ENCODE measurements at regions of chr2 and their contacts with region 1.

Region 1: GRCh38 chr2:44361330-44362206 is at the starts of genes CAMKMT and PREPL:
- DNase-seq: peak; percentile 99
- H3K4me3 ChIP-seq: peak within 1 kb of the TSS; percentile 82 to 98 (median 92)
- H3K27ac ChIP-seq: peak within 1 kb of the TSS; percentile 86 to 95 (median 91)
- H3K4me1 ChIP-seq: peaks cover 0 to 38% (median 27%) of the 10 kb centered on the region in 4 donors
- H3K27me3 ChIP-seq: no peaks in the 10 kb centered on the region
- CTCF ChIP-seq: no peak
- EP300 ChIP-seq: peak in 2 of 4 donors; percentile 41 to 66
- POLR2A ChIP-seq: peak; percentile 48 to 60
- total RNA-seq, gene CAMKMT: 11.6 to 15.6 (median 13.5) TPM
- total RNA-seq, gene PREPL: 41.5 to 52.6 (median 48.1) TPM

Region 2: GRCh38 chr2:43995733-43996533 is 365.6 kb before region 1 on chr2 and contains the start of gene LRPPRC:
- intact Hi-C with region 1: loop called (anchors 5 kb)
- DNase-seq: peak; percentile 98
- H3K4me3 ChIP-seq: peak within 1 kb of the TSS; percentile 81 to 100 (median 98)
- H3K27ac ChIP-seq: peak within 1 kb of the TSS; percentile 85 to 90 (median 88)
- H3K4me1 ChIP-seq: peaks cover 0 to 31% (median 25%) of the 10 kb centered on the region in 4 donors
- H3K27me3 ChIP-seq: no peaks in the 10 kb centered on the region
- CTCF ChIP-seq: no peak
- EP300 ChIP-seq: peak in 1 of 4 donors; percentile 35
- POLR2A ChIP-seq: peak; percentile 45 to 70
- total RNA-seq, gene LRPPRC: 49.7 to 65.7 (median 55.8) TPM

Region 3: GRCh38 chr2:44087036-44087713 is 274.4 kb before region 1 on chr2:
- intact Hi-C with region 1: loop called (anchors 5 kb)
- DNase-seq: peak; percentile 90
- H3K4me3 ChIP-seq: peak overlapping the region; percentile 13 to 45 (median 36)
- H3K27ac ChIP-seq: peak overlapping the region; percentile 53 to 74 (median 68)
- H3K4me1 ChIP-seq: peaks cover 0 to 15% (median 9%) of the 10 kb centered on the region in 4 donors
- H3K27me3 ChIP-seq: no peaks in the 10 kb centered on the region
- CTCF ChIP-seq: peak; percentile 74 to 95 (median 90)
- EP300 ChIP-seq: no peak
- POLR2A ChIP-seq: no peak

Region 4: DNA sequence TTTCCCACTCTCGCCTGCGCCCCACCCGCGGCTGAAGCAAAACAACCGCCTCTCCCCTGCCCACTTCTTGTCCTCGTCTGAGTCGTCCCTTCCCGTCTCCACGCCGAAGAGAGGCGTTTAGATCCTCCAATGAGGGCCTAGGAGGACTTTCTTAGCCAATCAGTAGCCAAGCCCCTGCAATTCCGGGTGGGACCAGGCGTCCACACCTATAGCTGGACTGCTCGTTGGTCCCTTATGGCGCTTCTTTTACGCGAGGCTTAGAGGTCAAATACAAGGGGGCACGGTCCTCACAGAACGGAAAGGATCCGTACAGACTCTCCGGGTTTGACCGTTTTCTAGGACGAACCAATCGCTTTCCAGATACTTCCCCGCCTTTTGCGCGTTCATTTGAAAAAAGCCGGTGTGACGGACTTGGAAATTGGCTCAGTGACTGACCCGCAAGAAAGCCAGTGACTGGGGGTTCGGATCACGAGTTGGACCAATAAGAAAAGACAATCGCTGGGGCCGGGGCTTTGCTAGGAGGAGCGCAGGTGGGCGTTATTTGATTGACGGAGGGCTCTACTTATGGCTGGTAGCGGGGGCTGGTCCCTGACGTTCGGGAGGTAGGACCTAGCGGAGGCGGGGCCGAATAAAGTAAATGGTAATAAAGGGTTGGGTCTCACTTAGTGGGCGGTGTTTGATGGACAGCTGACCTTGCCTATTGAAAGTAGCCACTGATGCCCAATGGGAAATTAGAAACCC is 193.5 kb before region 1 on chr2:
- intact Hi-C with region 1: loop called (anchors 2 kb)
- DNase-seq: peak; percentile 100
- H3K4me3 ChIP-seq: peak overlapping the region; percentile 43 to 87 (median 54)
- H3K27ac ChIP-seq: peak overlapping the region; percentile 95 to 96 (median 95)
- H3K4me1 ChIP-seq: peaks cover 0 to 25% (median 16%) of the 10 kb centered on the region in 4 donors
- H3K27me3 ChIP-seq: no peaks in the 10 kb centered on the region
- CTCF ChIP-seq: no peak
- EP300 ChIP-seq: no peak
- POLR2A ChIP-seq: no peak

Region 5: GRCh38 chr2:44244129-44244871 is 117.3 kb before region 1 on chr2:
- intact Hi-C with region 1: loop called (anchors 10 kb)
- DNase-seq: peak; percentile 72
- H3K4me3 ChIP-seq: peak overlapping the region; percentile 12 to 44 (median 31)
- H3K27ac ChIP-seq: peak overlapping the region in 1 of 4 donors; percentile 22
- H3K4me1 ChIP-seq: peaks cover 0 to 9% (median 5%) of the 10 kb centered on the region in 4 donors
- H3K27me3 ChIP-seq: no peaks in the 10 kb centered on the region
- CTCF ChIP-seq: peak in 3 of 4 experiments; percentile 26 to 59 (median 29)
- EP300 ChIP-seq: no peak
- POLR2A ChIP-seq: no peak

Region 6: GRCh38 chr2:44324971-44325426 is 36.6 kb before region 1 on chr2:
- intact Hi-C with region 1: no loop called
- DNase-seq: no peak
- H3K4me3 ChIP-seq: no peak overlapping the region
- H3K27ac ChIP-seq: no peak overlapping the region
- H3K4me1 ChIP-seq: peaks cover 0 to 10% (median 8%) of the 10 kb centered on the region in 4 donors
- H3K27me3 ChIP-seq: no peaks in the 10 kb centered on the region
- CTCF ChIP-seq: no peak
- EP300 ChIP-seq: no peak
- POLR2A ChIP-seq: no peak

Measured in sigmoid colon (tissue), 7 donors.